ENCODE measurements at regions of chr12 and their contacts with region 1.

Region 1: GRCh38 chr12:10771132-10771733 is 31.2 kb downstream of the TAS2R7 start:
- DNase-seq: no peak
- ATAC-seq: no peak
- H3K4me3 ChIP-seq: no peak overlapping the region
- H3K27ac ChIP-seq: no peak overlapping the region
- H3K4me1 ChIP-seq: no peaks in the 10 kb centered on the region
- H3K27me3 ChIP-seq: peaks cover 0 to 8% (median 0%) of the 10 kb centered on the region in 3 donors
- CTCF ChIP-seq: peak; percentile 48 to 84 (median 63)
- POLR2A ChIP-seq: no peak

Region 2: DNA sequence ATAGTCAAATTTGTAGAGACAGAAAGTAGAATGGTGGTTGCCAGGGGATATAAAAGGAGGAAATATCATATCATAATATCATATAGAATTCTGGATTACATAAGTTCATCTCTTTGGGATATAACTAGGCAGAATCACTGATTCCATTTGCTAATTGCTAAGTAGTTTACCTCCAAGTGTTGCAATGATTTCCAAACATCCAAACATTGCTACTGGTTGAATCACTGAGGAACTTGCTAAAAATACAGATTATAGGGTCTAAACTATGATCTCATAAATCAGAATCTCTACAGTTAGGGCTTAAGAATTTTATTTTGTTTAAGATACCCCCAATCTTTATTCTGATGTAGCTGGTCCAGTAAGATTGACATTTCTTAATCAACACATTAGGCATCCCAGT is 431.6 kb after region 1 on chr12:
- in situ Hi-C with region 1: loop called (anchors 5 to 10 kb)
- intact Hi-C with region 1: loop called (anchors 1 kb)
- DNase-seq: no peak
- ATAC-seq: no peak
- H3K4me3 ChIP-seq: no peak overlapping the region
- H3K27ac ChIP-seq: no peak overlapping the region
- H3K4me1 ChIP-seq: no peaks in the 10 kb centered on the region
- H3K27me3 ChIP-seq: no peaks in the 10 kb centered on the region
- CTCF ChIP-seq: no peak
- POLR2A ChIP-seq: no peak

Region 3: GRCh38 chr12:11209108-11209507 is 437.9 kb after region 1 on chr12:
- in situ Hi-C with region 1: loop called in 1 of 4 experiments (anchors 10 kb)
- intact Hi-C with region 1: no loop called
- DNase-seq: no peak
- ATAC-seq: no peak
- H3K4me3 ChIP-seq: no peak overlapping the region
- H3K27ac ChIP-seq: no peak overlapping the region
- H3K4me1 ChIP-seq: no peaks in the 10 kb centered on the region
- H3K27me3 ChIP-seq: no peaks in the 10 kb centered on the region
- CTCF ChIP-seq: no peak
- POLR2A ChIP-seq: no peak

Measured in gastrocnemius medialis (tissue), 4 donors.